ENCODE measurements at regions of chr16 and their contacts with region 1.

Region 1: DNA sequence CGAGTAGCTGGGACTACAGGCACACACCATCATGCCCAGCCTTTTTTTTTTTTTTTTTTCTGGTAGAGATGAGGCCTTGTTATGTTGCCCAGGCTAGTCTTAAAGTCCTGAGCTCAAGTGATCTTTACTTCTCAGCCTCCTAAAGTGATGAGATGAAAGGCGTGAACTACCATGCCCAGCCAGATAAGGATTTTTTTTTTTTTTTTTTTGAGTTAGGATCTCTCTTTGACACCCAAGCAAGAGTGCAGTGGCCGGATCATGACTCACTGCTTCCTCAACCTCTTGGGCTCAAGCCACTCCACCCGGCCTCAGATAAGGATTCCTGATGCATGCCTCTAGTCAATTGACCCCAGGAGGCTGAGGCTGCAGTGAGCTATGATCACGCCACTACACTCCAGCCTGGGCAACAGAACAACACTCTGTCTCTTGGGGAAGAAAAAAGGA is 11.2 kb upstream of the PLEKHG4 start:
- DNase-seq: peak; percentile 83 to 87
- H3K4me3 ChIP-seq: no peak overlapping the region
- H3K27ac ChIP-seq: no peak overlapping the region
- H3K4me1 ChIP-seq: peaks cover 18% of the 10 kb centered on the region
- H3K27me3 ChIP-seq: no peaks in the 10 kb centered on the region
- CTCF ChIP-seq: no peak

Region 2: GRCh38 chr16:66740010-66740409 is 528.1 kb before region 1 on chr16:
- CTCF ChIA-PET with region 1: no interaction called
- POLR2A ChIA-PET with region 1: no interaction called
- intact Hi-C with region 1: no loop called
- DNase-seq: no peak
- H3K4me3 ChIP-seq: no peak overlapping the region
- H3K27ac ChIP-seq: no peak overlapping the region
- H3K4me1 ChIP-seq: peaks cover 36% of the 10 kb centered on the region
- H3K27me3 ChIP-seq: no peaks in the 10 kb centered on the region
- CTCF ChIP-seq: peak; percentile 76

Region 3: GRCh38 chr16:66961914-66962313 is 306.2 kb before region 1 on chr16:
- CTCF ChIA-PET with region 1: no interaction called
- POLR2A ChIA-PET with region 1: interaction called, 24 read pairs
- intact Hi-C with region 1: no loop called
- DNase-seq: no peak
- H3K4me3 ChIP-seq: no peak overlapping the region
- H3K27ac ChIP-seq: no peak overlapping the region
- H3K4me1 ChIP-seq: no peaks in the 10 kb centered on the region
- H3K27me3 ChIP-seq: no peaks in the 10 kb centered on the region
- CTCF ChIP-seq: no peak

Region 4: DNA sequence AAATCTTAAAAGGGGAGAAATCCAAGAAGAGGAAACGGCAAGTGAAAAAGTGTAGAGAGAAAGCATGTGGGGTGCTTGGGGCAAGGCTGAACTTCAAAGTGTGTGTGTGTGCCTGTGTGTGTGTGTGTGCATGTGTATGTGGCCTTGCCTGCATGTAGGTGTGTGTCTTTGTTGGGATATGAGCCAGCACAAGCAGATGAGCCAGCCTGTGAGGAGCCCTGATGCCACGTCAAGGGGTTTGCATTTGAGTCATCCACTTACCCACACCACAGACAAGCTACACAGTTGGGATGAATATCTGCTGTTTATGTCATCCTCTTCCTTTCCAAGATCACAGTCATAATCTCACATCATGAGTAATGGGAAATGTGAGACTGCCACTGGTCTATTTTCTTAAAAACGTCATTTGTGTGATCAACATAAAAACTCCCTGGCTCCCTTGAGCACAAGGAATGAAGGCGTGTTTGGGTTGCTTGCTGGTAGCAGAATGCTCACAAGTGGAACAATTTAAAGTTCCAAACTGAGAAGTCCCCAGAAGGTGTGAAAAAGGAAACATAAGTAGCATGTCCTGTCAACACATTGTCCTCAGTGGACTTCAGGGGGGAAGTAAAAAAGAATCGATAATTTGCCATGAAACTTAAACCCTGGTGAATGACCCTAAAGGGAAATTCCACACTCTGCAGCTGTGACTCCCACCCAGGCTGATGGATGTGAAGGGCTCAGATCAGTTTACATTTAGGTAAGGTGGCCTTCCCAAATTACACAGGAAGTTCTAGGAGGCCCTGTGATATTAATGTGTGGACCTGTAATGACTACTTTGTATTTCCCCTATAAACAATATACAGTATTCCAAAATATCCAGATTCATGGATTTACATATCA is 43.7 kb after region 1 on chr16:
- CTCF ChIA-PET with region 1: no interaction called
- POLR2A ChIA-PET with region 1: interaction called, 14 read pairs
- intact Hi-C with region 1: no loop called
- DNase-seq: peak; percentile 51 to 95
- H3K4me3 ChIP-seq: no peak overlapping the region
- H3K27ac ChIP-seq: peak overlapping the region; percentile 70
- H3K4me1 ChIP-seq: peaks cover 23% of the 10 kb centered on the region
- H3K27me3 ChIP-seq: no peaks in the 10 kb centered on the region
- CTCF ChIP-seq: no peak

Region 5: DNA sequence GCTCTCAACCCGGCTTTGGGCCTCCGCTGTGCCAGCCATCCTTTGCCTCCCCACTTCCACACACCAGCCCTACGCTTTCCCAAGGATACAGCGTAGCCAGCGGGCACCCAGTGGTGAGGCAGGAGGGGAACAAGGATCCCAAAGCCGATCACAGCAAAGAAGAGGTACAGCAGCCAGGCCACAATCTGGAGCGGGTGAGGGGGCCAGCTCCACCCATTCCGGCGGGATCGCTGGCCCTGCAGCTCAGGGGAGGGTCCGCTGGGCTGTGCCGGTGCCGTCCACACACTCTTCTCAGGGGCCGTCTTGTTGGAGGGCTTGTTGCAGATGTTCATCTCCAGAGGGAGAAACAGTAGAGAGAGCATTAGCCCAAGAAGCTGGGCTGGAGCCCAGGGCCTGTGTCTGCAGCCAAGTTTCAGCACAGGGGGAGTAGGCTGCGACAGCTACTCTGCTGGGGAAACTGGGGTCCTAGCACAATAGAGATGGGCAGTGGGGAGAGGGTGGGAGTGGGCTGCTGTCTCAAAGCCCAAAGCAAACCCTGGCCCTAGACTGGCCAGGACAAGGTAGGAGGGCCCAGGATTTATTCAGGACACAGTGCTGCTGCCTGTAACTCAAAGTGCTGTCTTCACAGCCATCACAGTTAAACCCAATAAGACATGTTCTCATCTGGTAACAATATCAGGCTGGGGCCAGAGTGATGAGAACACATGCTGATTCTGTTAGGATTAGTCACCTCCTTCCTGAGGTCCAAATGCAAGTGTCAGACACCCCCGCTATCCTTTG is 138.1 kb after region 1 on chr16:
- CTCF ChIA-PET with region 1: no interaction called
- POLR2A ChIA-PET with region 1: interaction called, 20 read pairs
- intact Hi-C with region 1: no loop called
- DNase-seq: no peak
- H3K4me3 ChIP-seq: no peak overlapping the region
- H3K27ac ChIP-seq: peak overlapping the region; percentile 86; the same call in 1 of the 2 replicates
- H3K4me1 ChIP-seq: peaks cover 33% of the 10 kb centered on the region
- H3K27me3 ChIP-seq: no peaks in the 10 kb centered on the region
- CTCF ChIP-seq: no peak